Mucosa of descending colon (tissue), 3 donors: ENCODE measurements at regions of chr17 and their contacts with region 1.

Region 1: GRCh38 chr17:57662644-57663308 is 82.3 kb downstream of the CCDC182 start:
- DNase-seq: peak; percentile 84 to 93 (median 87)
- ATAC-seq: peak; percentile 96
- H3K4me3 ChIP-seq: no peak overlapping the region
- H3K4me1 ChIP-seq: no peaks in the 10 kb centered on the region
- CTCF ChIP-seq: no peak

Region 2: GRCh38 chr17:57604771-57605674 is 57.8 kb before region 1 on chr17:
- intact Hi-C with region 1: loop called in 1 of 2 experiments (anchors 10 kb)
- DNase-seq: peak in 2 of 3 donors; percentile 65 to 67
- ATAC-seq: peak; percentile 72
- H3K4me3 ChIP-seq: no peak overlapping the region
- H3K4me1 ChIP-seq: peaks cover 29% of the 10 kb centered on the region
- CTCF ChIP-seq: no peak